ENCODE measurements at regions of chr10 and their contacts with region 1.

Region 1: GRCh38 chr10:84537447-84537931 is 209.1 kb downstream of the CCSER2 start:
- DNase-seq: peak; percentile 70
- H3K4me3 ChIP-seq: no peak overlapping the region
- H3K27ac ChIP-seq: no peak overlapping the region
- H3K4me1 ChIP-seq: peaks cover 13% of the 10 kb centered on the region
- H3K27me3 ChIP-seq: no peaks in the 10 kb centered on the region
- CTCF ChIP-seq: peak; percentile 57 to 66
- POLR2A ChIP-seq: no peak

Region 2: GRCh38 chr10:84264611-84265141 is 272.8 kb before region 1 on chr10:
- CTCF ChIA-PET with region 1: interaction called, 510 read pairs
- POLR2A ChIA-PET with region 1: no interaction called
- dilution Hi-C with region 1: no loop called
- intact Hi-C with region 1: loop called (anchors 1 kb)
- DNase-seq: peak; percentile 73
- H3K4me3 ChIP-seq: no peak overlapping the region
- H3K27ac ChIP-seq: no peak overlapping the region
- H3K4me1 ChIP-seq: no peaks in the 10 kb centered on the region
- H3K27me3 ChIP-seq: peaks cover 8 to 11% of the 10 kb centered on the region in 2 experiments
- CTCF ChIP-seq: peak; percentile 89 to 95
- POLR2A ChIP-seq: no peak

Region 3: GRCh38 chr10:84352251-84352842 is 185.1 kb before region 1 on chr10:
- CTCF ChIA-PET with region 1: interaction called, 46 read pairs
- POLR2A ChIA-PET with region 1: no interaction called
- dilution Hi-C with region 1: no loop called
- intact Hi-C with region 1: loop called (anchors 1 kb)
- DNase-seq: peak; percentile 63
- H3K4me3 ChIP-seq: no peak overlapping the region
- H3K27ac ChIP-seq: no peak overlapping the region
- H3K4me1 ChIP-seq: peaks cover 7% of the 10 kb centered on the region
- H3K27me3 ChIP-seq: no peaks in the 10 kb centered on the region
- CTCF ChIP-seq: peak; percentile 66 to 78
- POLR2A ChIP-seq: no peak

Region 4: GRCh38 chr10:84429926-84430520 is 107.5 kb before region 1 on chr10:
- CTCF ChIA-PET with region 1: interaction called, 190 read pairs
- POLR2A ChIA-PET with region 1: no interaction called
- dilution Hi-C with region 1: no loop called
- intact Hi-C with region 1: loop called (anchors 1 kb)
- DNase-seq: peak; percentile 73
- H3K4me3 ChIP-seq: no peak overlapping the region
- H3K27ac ChIP-seq: no peak overlapping the region
- H3K4me1 ChIP-seq: peaks cover 6% of the 10 kb centered on the region
- H3K27me3 ChIP-seq: no peaks in the 10 kb centered on the region
- CTCF ChIP-seq: peak; percentile 70 to 81
- POLR2A ChIP-seq: no peak

Region 5: DNA sequence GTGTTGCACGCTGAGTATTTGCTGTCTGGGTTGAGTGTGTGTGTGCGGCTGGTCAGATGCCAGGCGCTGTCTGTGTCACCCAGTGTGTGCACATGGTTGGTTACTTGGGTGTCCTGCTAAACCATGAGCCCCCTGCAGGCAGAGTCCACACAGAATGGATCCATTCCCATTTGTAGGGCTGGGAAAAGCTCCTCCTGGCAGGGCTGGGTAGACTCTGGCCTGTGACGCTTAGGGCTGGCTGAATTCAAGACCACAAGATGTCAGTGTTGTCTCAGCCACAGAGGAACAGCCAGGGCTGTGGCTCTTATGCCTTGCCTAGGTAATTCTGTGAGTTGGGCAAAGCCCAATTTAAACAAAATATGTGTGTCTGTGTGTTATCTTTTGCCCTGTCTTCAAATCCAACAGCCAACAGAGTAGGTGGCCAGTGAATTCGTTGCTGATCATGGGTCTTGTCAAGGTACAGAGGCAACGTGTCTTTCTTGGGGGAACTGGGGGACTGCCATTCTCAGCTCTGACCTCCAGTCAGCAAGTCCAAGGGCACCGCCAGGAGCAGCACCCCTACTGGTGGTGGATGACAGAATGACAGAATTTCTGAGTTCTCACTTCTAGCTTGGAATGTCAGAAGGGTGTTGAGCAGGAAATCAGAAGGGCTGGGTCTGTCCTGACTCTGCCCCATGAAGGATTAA is 76.0 kb after region 1 on chr10:
- CTCF ChIA-PET with region 1: no interaction called
- POLR2A ChIA-PET with region 1: no interaction called
- dilution Hi-C with region 1: no loop called
- intact Hi-C with region 1: loop called (anchors 1 kb)
- DNase-seq: no peak
- H3K4me3 ChIP-seq: no peak overlapping the region
- H3K27ac ChIP-seq: no peak overlapping the region
- H3K4me1 ChIP-seq: no peaks in the 10 kb centered on the region
- H3K27me3 ChIP-seq: no peaks in the 10 kb centered on the region
- CTCF ChIP-seq: no peak
- POLR2A ChIP-seq: no peak

Region 6: GRCh38 chr10:84654671-84655070 is 117.2 kb after region 1 on chr10:
- CTCF ChIA-PET with region 1: no interaction called
- POLR2A ChIA-PET with region 1: no interaction called
- dilution Hi-C with region 1: no loop called
- intact Hi-C with region 1: no loop called
- DNase-seq: no peak
- H3K4me3 ChIP-seq: no peak overlapping the region
- H3K27ac ChIP-seq: no peak overlapping the region
- H3K4me1 ChIP-seq: no peaks in the 10 kb centered on the region
- H3K27me3 ChIP-seq: no peaks in the 10 kb centered on the region
- CTCF ChIP-seq: no peak
- POLR2A ChIP-seq: no peak

Region 7: DNA sequence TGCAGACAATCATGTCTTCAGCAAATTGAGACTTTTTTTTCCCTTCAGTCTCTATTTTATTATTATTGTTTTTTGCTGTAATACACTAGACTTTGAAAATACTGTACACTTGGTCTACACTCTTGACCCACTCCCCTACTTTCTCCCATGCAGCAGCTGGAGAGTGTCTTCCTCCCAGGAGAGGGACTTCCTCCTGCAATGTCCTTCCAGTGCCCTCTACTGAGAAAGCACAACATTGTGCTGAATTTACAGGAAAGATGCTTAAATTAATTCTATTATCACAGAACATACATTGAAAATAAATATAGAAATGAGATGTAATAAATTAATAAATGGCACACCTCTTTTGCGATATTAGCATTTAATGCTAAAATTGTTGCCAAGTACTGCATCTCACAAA is 202.2 kb after region 1 on chr10:
- CTCF ChIA-PET with region 1: no interaction called
- POLR2A ChIA-PET with region 1: no interaction called
- dilution Hi-C with region 1: no loop called
- intact Hi-C with region 1: no loop called
- DNase-seq: no peak
- H3K4me3 ChIP-seq: no peak overlapping the region
- H3K27ac ChIP-seq: no peak overlapping the region
- H3K4me1 ChIP-seq: no peaks in the 10 kb centered on the region
- H3K27me3 ChIP-seq: no peaks in the 10 kb centered on the region
- CTCF ChIP-seq: no peak
- POLR2A ChIP-seq: no peak

Region 8: DNA sequence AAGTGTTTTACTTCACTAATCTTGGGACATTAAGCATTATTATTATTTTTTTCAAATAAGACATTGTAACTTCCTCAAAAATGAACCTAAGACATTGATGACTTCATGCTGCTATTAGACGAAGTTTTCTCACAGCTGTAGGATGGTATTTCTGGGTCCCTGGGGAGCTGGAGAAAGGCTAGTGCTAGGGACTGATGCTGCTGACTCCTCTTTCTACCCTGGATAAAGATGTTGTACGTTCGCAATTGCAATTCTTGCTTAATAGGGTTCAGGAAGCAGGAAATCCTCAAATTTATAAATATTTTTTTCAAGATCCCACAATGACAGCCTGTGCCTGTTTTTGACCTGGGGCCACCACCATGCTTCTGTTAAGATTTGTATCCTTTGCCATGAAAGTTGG is 316.9 kb after region 1 on chr10:
- CTCF ChIA-PET with region 1: no interaction called
- POLR2A ChIA-PET with region 1: no interaction called
- dilution Hi-C with region 1: no loop called
- intact Hi-C with region 1: no loop called
- DNase-seq: no peak
- H3K4me3 ChIP-seq: no peak overlapping the region
- H3K27ac ChIP-seq: no peak overlapping the region
- H3K4me1 ChIP-seq: no peaks in the 10 kb centered on the region
- H3K27me3 ChIP-seq: no peaks in the 10 kb centered on the region
- CTCF ChIP-seq: no peak
- POLR2A ChIP-seq: no peak